KBM-7 (cell line): ENCODE measurements at regions of chr15 and their contacts with region 1.

Region 1: GRCh38 chr15:61811952-61812351 is 248.3 kb downstream of the VPS13C start:
- DNase-seq: no peak

Region 2: GRCh38 chr15:61155741-61156700 is 655.9 kb before region 1 on chr15:
- in situ Hi-C with region 1: loop called (anchors 25 kb)
- DNase-seq: peak; percentile 8

Region 3: DNA sequence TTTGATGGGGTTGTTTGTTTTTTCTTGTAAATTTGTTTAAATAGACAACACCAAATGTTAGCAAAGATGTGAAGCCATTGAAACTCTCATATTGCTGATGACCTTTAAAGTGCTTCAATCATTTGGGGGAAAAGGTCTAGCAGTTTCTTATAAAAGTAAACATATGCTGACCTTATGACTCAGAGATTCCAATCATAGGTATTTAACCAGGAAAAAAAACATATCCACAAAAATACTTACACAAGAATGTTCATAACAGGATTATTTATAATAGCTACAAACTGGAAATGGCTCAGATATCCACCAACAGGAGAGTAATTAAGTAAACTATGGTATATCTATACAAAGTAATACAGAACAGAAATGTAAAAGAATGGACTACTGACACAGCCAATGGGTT is 555.7 kb before region 1 on chr15:
- in situ Hi-C with region 1: no loop called
- DNase-seq: no peak

Region 4: GRCh38 chr15:61687124-61687523 is 124.8 kb before region 1 on chr15:
- in situ Hi-C with region 1: no loop called
- DNase-seq: no peak